ENCODE measurements at regions of chr1 and their contacts with region 1.

Region 1: GRCh38 chr1:232635778-232636356 is 5.9 kb upstream of the SIPA1L2 start:
- DNase-seq: peak; percentile 41 to 56 (median 50)
- ATAC-seq: peak; percentile 90
- H3K4me3 ChIP-seq: no peak overlapping the region
- H3K27ac ChIP-seq: no peak overlapping the region
- H3K4me1 ChIP-seq: no peaks in the 10 kb centered on the region
- H3K27me3 ChIP-seq: peaks cover 0 to under 1% of the 10 kb centered on the region in 2 experiments; a peak in 2 of 5 replicates
- CTCF ChIP-seq: peak in 2 of 3 experiments; percentile 38 to 74; a peak in 4 of 6 replicates
- EP300 ChIP-seq: no peak
- POLR2A ChIP-seq: no peak
- RAD21 ChIP-seq: peak; percentile 85 to 87

Region 2: DNA sequence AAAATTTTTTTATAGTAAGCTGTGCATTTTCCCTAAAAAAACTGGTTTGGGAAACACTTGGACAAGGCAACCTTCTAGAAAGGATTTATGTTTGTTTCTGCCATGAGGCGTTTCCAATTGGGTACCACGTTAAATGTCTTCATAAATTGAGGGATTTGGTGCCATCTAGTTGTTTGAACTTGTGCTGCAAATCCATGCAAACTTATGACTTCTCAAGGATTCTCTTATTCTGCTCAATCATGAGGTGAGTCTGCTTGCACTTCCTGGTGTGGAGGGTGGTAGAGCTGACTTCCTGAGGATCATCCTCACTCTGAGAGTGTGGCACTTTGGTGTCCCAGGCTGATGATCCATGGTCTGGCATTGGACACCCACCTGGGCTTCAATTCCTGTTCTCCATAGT is 536.4 kb after region 1 on chr1:
- CTCF ChIA-PET with region 1: no interaction called
- POLR2A ChIA-PET with region 1: no interaction called
- in situ Hi-C with region 1: no loop called
- intact Hi-C with region 1: loop called (anchors 5 kb)
- DNase-seq: peak in 1 of 4 experiments; percentile 19
- ATAC-seq: peak; percentile 70
- H3K4me3 ChIP-seq: no peak overlapping the region
- H3K27ac ChIP-seq: no peak overlapping the region
- H3K4me1 ChIP-seq: no peaks in the 10 kb centered on the region
- H3K27me3 ChIP-seq: no peaks in the 10 kb centered on the region
- CTCF ChIP-seq: peak in 2 of 3 experiments; percentile 44; a peak in 3 of 6 replicates
- EP300 ChIP-seq: no peak
- POLR2A ChIP-seq: no peak
- RAD21 ChIP-seq: peak; percentile 74 to 79